Activated CD4-positive, alpha-beta memory T cell treated with anti-CD3 and anti-CD28 coated beads for 36 hours (primary cell): ENCODE measurements at regions of chr6 and their contacts with region 1.

Region 1: DNA sequence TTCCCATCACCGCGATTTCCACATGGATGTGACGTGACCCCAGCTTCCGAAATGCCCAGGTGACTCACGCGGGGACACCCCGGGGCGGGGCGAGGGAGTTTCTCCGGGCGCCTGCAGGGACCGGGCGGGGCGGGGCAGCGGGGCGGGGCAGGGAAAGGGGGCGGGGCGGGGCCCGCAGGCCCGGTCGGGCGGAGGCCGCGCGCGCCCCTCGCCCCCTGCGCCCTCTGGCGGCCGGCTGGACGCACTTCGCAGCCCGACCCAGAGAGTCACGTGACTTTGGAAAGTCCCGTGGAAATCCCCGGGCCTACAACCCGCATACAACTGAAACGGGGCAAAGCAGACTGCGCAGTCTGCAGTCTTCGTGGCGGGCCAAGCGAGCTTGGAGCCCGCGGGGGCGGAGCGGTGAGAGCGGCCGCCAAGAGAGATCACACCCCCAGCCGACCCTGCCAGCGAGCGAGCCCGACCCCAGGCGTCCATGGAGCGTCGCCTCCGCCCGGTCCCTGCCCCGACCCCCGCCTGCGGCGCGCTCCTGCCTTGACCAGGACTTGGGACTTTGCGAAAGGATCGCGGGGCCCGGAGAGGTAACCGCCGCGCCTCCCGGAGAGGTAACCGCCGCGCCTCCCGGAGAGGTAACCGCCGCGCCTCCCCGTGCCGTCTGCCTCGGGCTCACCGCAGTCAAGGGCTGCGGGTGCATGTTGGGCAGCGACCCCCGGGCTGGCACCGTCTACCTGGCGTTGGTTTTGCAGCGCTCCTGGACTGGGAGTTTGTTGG is at the start of gene TNFAIP3:
- DNase-seq: peak; percentile 97
- H3K4me3 Mint-ChIP-seq: peak within 1 kb of the TSS; percentile 91
- H3K27ac Mint-ChIP-seq: peak within 1 kb of the TSS; percentile 93
- H3K4me1 Mint-ChIP-seq: peaks cover 32% of the 10 kb centered on the region
- H3K27me3 Mint-ChIP-seq: no peaks in the 10 kb centered on the region
- total RNA-seq, gene TNFAIP3: 259 to 267 TPM

Region 2: GRCh38 chr6:137697267-137697938 is 169.7 kb before region 1 on chr6:
- CTCF ChIA-PET with region 1: interaction called, 20 read pairs
- POLR2A ChIA-PET with region 1: interaction called, 49 read pairs
- intact Hi-C with region 1: no loop called
- DNase-seq: peak; percentile 52
- H3K4me3 Mint-ChIP-seq: no peak overlapping the region
- H3K27ac Mint-ChIP-seq: peak overlapping the region; percentile 43
- H3K4me1 Mint-ChIP-seq: peaks cover 57% of the 10 kb centered on the region
- H3K27me3 Mint-ChIP-seq: peaks cover 1% of the 10 kb centered on the region

Region 3: GRCh38 chr6:137799950-137800568 is 67.0 kb before region 1 on chr6:
- CTCF ChIA-PET with region 1: interaction called, 170 read pairs
- POLR2A ChIA-PET with region 1: interaction called, 40 read pairs
- intact Hi-C with region 1: loop called (anchors 1 kb)
- DNase-seq: peak; percentile 72
- H3K4me3 Mint-ChIP-seq: peak overlapping the region; percentile 4
- H3K27ac Mint-ChIP-seq: peak overlapping the region; percentile 69
- H3K4me1 Mint-ChIP-seq: peaks cover 57% of the 10 kb centered on the region
- H3K27me3 Mint-ChIP-seq: no peaks in the 10 kb centered on the region

Region 4: GRCh38 chr6:137849181-137849980 is 17.7 kb before region 1 on chr6:
- CTCF ChIA-PET with region 1: interaction called, 5 read pairs
- POLR2A ChIA-PET with region 1: interaction called, 13 read pairs
- intact Hi-C with region 1: loop called (anchors 1 kb)
- DNase-seq: peak; percentile 78
- H3K4me3 Mint-ChIP-seq: no peak overlapping the region
- H3K27ac Mint-ChIP-seq: peak overlapping the region; percentile 79
- H3K4me1 Mint-ChIP-seq: peaks cover 35% of the 10 kb centered on the region
- H3K27me3 Mint-ChIP-seq: no peaks in the 10 kb centered on the region

Region 5: GRCh38 chr6:137944793-137945498 is 77.8 kb after region 1 on chr6:
- CTCF ChIA-PET with region 1: interaction called, 270 read pairs
- POLR2A ChIA-PET with region 1: interaction called, 33 read pairs
- intact Hi-C with region 1: loop called (anchors 1 kb)
- DNase-seq: peak; percentile 24
- H3K4me3 Mint-ChIP-seq: no peak overlapping the region
- H3K27ac Mint-ChIP-seq: peak overlapping the region; percentile 47
- H3K4me1 Mint-ChIP-seq: peaks cover 40% of the 10 kb centered on the region
- H3K27me3 Mint-ChIP-seq: no peaks in the 10 kb centered on the region

Region 6: DNA sequence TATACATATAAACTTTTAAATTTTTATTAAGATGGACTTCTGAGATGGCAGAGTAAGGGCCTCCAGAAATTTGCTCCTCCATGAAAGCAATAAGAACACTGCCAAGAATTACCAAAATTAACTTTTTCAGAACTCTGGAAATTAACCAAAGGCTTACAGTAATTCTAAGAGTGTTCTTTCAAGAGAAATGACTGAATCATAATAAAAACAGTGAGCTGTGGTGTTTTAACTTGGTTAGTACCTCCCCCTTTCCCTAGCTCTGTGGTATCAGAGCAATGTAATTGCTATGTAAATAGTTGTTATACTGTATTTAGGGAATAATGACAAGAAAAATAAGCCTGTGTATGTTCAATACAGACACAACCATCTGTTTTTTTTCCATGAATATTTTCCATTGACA is 1286.8 kb after region 1 on chr6:
- CTCF ChIA-PET with region 1: no interaction called
- POLR2A ChIA-PET with region 1: no interaction called
- intact Hi-C with region 1: loop called (anchors 5 kb)
- DNase-seq: no peak
- H3K4me3 Mint-ChIP-seq: peak overlapping the region; percentile 37
- H3K27ac Mint-ChIP-seq: peak overlapping the region; percentile 98
- H3K4me1 Mint-ChIP-seq: peaks cover 85% of the 10 kb centered on the region
- H3K27me3 Mint-ChIP-seq: no peaks in the 10 kb centered on the region